Mammary epithelial cell (primary cell): ENCODE measurements at regions of chr4 and their contacts with region 1.

Region 1: DNA sequence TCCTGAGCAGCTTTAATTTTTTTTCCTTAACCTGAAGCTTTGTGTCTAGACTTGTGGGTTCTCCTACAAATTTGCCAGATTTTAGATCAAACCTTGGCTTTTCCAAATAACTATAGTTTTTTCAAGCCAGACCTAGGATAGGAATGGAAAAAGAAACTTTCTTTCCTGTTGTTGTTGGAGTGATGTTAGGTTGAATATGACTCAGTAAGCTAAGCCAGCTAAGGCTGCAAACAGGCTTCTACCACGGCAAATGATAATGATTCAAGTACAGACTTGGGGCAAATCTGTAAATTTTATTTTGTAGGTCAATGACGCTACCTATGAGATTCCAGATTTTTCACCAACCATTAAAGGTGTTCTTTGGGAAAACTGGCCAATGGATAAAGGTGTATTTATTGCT is 45.6 kb downstream of the WDR19 start:
- DNase-seq: no peak
- H3K4me3 ChIP-seq: no peak overlapping the region
- H3K27ac ChIP-seq: no peak overlapping the region
- H3K4me1 ChIP-seq: no peaks in the 10 kb centered on the region
- H3K27me3 ChIP-seq: no peaks in the 10 kb centered on the region
- CTCF ChIP-seq: no peak

Region 2: GRCh38 chr4:38860788-38861424 is 367.0 kb before region 1 on chr4:
- CTCF ChIA-PET with region 1: no interaction called
- dilution Hi-C with region 1: no loop called
- in situ Hi-C with region 1: no loop called
- intact Hi-C with region 1: no loop called
- DNase-seq: peak; percentile 47
- H3K4me3 ChIP-seq: no peak overlapping the region
- H3K27ac ChIP-seq: no peak overlapping the region
- H3K4me1 ChIP-seq: peaks cover 20% of the 10 kb centered on the region
- H3K27me3 ChIP-seq: no peaks in the 10 kb centered on the region
- CTCF ChIP-seq: peak; percentile 86 to 87

Region 3: DNA sequence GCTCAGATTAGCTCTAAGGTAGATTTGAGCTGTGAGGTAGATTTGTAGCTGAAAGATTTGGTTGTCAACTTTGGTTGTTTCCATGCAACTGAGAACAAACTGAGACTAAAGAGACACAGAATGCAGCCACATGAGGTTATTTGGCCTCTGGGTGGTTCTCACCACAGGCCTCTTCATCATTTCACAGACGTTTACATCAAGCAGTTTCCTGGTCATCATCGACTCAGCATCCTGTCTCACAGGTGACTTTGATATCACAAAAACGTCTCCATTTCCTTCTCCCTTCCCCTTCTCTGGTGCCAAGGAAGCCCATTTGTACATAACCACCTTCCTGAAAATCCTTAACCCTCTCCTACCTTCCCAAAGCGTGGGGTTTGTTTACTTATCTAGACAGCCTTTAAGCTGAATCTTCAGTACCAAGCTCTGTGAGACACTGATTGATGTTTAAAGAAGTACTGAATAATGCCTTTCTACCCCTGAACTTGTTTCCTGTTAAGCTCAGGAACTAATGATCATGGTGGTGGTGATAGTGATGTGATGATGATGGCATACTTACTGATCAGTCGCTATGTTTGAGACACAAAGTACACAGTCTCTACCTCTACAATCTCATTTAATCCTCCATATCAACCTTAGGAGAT is 278.4 kb before region 1 on chr4:
- CTCF ChIA-PET with region 1: no interaction called
- dilution Hi-C with region 1: no loop called
- in situ Hi-C with region 1: no loop called
- intact Hi-C with region 1: no loop called
- DNase-seq: peak; percentile 67
- H3K4me3 ChIP-seq: no peak overlapping the region
- H3K27ac ChIP-seq: peak overlapping the region; percentile 57
- H3K4me1 ChIP-seq: peaks cover 17% of the 10 kb centered on the region
- H3K27me3 ChIP-seq: no peaks in the 10 kb centered on the region
- CTCF ChIP-seq: no peak

Region 4: DNA sequence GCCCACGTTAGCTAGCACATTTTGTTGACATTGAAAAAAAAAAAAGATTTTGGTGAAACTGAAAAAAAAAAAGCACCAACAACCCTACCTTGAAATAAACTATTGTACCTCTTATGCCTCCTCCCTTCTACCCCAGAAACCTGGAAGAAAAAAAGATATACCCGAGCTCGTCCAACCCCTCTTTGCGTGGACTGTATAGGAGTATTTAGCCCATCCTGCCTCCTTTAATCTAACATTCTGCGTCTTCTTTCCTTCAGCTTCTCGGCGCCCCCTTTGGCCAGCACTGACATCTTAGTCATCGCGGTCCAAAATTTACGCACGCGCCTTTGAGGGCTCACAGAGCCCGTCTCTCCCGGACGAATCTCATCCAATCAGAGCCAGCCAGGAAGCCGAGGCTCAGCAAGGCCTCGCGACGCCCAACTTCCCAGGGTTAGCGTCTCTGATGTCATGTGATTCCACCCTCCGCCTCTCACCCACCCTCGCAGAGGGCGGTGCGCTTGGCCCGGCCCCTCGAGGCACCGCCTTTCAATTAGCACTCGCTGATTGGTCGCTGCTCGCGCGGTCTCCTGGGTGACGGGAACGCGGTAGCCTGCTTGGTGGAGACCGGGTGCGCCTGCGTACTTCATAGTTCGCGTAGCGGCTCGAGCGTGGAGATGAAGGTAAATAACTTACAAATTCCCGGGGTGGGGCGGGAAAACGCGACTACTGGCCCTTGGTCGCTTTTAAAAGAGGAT is 45.8 kb before region 1 on chr4 and contains the start of gene WDR19:
- CTCF ChIA-PET with region 1: no interaction called
- dilution Hi-C with region 1: no loop called
- in situ Hi-C with region 1: no loop called
- intact Hi-C with region 1: no loop called
- DNase-seq: peak; percentile 100
- H3K4me3 ChIP-seq: peak within 1 kb of the TSS; percentile 89 to 96 (median 96)
- H3K27ac ChIP-seq: peak within 1 kb of the TSS; percentile 84
- H3K4me1 ChIP-seq: peaks cover 5% of the 10 kb centered on the region
- H3K27me3 ChIP-seq: no peaks in the 10 kb centered on the region
- CTCF ChIP-seq: peak; percentile 23 to 49
- total RNA-seq, gene WDR19: 14.4 to 23.7 TPM

Region 5: GRCh38 chr4:39274503-39274902 is 46.6 kb after region 1 on chr4:
- CTCF ChIA-PET with region 1: interaction called, 12 read pairs
- dilution Hi-C with region 1: no loop called
- in situ Hi-C with region 1: no loop called
- intact Hi-C with region 1: no loop called
- DNase-seq: no peak
- H3K4me3 ChIP-seq: no peak overlapping the region
- H3K27ac ChIP-seq: no peak overlapping the region
- H3K4me1 ChIP-seq: no peaks in the 10 kb centered on the region
- H3K27me3 ChIP-seq: no peaks in the 10 kb centered on the region
- CTCF ChIP-seq: no peak

Region 6: DNA sequence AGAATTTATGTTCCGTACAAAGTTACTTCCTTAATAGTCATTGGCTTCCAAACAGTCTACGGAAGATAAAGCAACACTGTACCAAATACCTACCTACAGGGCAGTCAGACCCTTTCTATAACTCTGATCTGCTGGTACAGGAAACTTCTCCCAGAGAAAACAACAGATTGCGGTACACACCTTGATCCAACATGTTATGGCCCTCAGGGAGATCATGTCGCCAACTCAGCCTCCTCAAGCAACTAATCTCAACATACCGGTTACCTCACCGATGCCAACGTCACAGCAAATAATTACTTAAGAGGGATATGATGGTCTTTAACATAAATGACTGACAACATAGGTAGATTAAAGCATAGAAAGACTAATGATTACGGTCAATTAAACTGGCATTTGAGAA is 67.9 kb after region 1 on chr4:
- CTCF ChIA-PET with region 1: no interaction called
- dilution Hi-C with region 1: no loop called
- in situ Hi-C with region 1: no loop called
- intact Hi-C with region 1: no loop called
- DNase-seq: no peak
- H3K4me3 ChIP-seq: no peak overlapping the region
- H3K27ac ChIP-seq: no peak overlapping the region
- H3K4me1 ChIP-seq: no peaks in the 10 kb centered on the region
- H3K27me3 ChIP-seq: no peaks in the 10 kb centered on the region
- CTCF ChIP-seq: no peak

Region 7: DNA sequence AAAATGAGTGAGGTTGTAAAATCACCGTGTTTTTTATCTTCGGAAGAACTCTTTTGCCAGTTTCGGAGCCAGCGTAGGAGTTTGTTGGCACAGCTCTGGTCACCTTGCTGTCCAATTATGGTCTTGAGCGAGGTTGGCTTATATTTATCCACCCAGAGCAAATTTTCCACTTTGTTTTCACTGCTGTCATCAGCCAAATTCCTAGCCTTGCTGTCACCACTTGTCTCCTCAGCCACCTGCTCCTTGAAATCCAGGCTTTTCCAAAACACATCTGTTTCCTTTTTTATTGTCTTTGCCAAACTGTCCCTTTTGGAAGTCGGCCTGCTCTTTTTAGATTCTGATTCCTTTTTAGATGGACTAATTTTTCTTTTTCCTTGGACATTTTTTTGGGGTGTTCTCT is 80.7 kb after region 1 on chr4:
- CTCF ChIA-PET with region 1: no interaction called
- dilution Hi-C with region 1: loop called (anchors 5 kb)
- in situ Hi-C with region 1: no loop called
- intact Hi-C with region 1: no loop called
- DNase-seq: no peak
- H3K4me3 ChIP-seq: no peak overlapping the region
- H3K27ac ChIP-seq: no peak overlapping the region
- H3K4me1 ChIP-seq: no peaks in the 10 kb centered on the region
- H3K27me3 ChIP-seq: no peaks in the 10 kb centered on the region
- CTCF ChIP-seq: no peak

Region 8: GRCh38 chr4:39410415-39410814 is 182.5 kb after region 1 on chr4:
- CTCF ChIA-PET with region 1: no interaction called
- dilution Hi-C with region 1: no loop called
- in situ Hi-C with region 1: no loop called
- intact Hi-C with region 1: loop called (anchors 10 kb)
- DNase-seq: no peak
- H3K4me3 ChIP-seq: no peak overlapping the region
- H3K27ac ChIP-seq: no peak overlapping the region
- H3K4me1 ChIP-seq: no peaks in the 10 kb centered on the region
- H3K27me3 ChIP-seq: no peaks in the 10 kb centered on the region
- CTCF ChIP-seq: no peak